ENCODE measurements at regions of chr2 and their contacts with region 1.

Region 1: GRCh38 chr2:9287400-9288043 is 80.9 kb downstream of the ASAP2 start:
- DNase-seq: peak; percentile 83 to 100
- H3K4me3 ChIP-seq: peak overlapping the region; percentile 33; the same call in 1 of the 2 replicates
- H3K27ac ChIP-seq: peak overlapping the region; percentile 96
- H3K4me1 ChIP-seq: peaks cover 59% of the 10 kb centered on the region
- H3K27me3 ChIP-seq: no peaks in the 10 kb centered on the region
- CTCF ChIP-seq: no peak

Region 2: DNA sequence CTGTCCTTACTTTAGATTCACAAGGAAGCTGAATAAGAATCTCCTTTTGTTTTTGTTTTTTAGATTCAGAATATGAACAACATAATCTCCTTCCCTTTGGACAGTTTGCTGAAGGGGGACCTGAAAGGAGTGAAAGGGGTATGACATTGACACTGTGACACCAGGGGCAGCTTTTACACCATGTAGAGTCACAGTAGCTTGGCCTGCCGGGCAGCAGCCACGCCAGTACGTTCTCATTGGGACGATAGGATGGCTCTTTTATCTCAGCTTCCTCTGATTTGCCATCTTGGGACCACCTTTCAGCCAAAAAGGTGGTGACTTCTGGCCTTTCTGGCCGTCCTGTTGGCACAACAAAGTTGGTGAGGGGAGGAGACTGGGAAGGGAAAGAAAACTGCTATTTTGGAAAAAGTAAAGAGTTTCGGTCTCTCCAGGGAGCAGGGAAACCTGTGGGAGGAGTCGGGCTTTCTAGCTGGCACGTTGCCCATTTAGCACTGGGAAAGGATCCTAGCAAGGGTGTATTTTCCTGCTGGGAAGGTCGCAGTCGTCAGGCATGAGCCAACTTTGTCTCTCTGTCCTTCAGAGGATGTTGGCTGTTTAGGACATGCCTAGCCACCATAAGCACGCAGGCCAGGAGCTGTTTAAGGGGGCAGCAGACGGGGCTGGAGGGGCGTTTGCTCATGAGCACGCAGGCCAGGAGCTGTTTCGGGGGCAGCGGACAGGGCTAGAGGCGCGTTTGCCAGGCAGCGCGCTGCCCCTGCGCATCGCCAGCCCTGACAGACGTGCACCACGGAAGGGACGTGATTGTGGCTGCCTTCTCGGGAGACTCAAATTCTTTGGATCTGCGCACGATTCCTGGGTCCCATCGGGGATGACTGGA is 31.2 kb after region 1 on chr2:
- CTCF ChIA-PET with region 1: no interaction called
- POLR2A ChIA-PET with region 1: no interaction called
- intact Hi-C with region 1: loop called (anchors 1 kb)
- DNase-seq: no peak
- H3K4me3 ChIP-seq: no peak overlapping the region
- H3K27ac ChIP-seq: no peak overlapping the region
- H3K4me1 ChIP-seq: 0 out of 2 replicates have a peak, but pooled peaks cover 7% of the 10 kb centered on the region
- H3K27me3 ChIP-seq: no peaks in the 10 kb centered on the region
- CTCF ChIP-seq: no peak

Measured in PC-9 (cell line).